A673 (cell line): ENCODE measurements at regions of chr1 and their contacts with region 1.

Region 1: GRCh38 chr1:183932412-183932811 is 105.1 kb downstream of the COLGALT2 start:
- DNase-seq: peak; percentile 69
- H3K4me3 ChIP-seq: no peak overlapping the region
- H3K27ac ChIP-seq: peak overlapping the region; percentile 32
- H3K4me1 ChIP-seq: peaks cover 21% of the 10 kb centered on the region
- H3K27me3 ChIP-seq: no peaks in the 10 kb centered on the region
- CTCF ChIP-seq: no peak

Region 2: DNA sequence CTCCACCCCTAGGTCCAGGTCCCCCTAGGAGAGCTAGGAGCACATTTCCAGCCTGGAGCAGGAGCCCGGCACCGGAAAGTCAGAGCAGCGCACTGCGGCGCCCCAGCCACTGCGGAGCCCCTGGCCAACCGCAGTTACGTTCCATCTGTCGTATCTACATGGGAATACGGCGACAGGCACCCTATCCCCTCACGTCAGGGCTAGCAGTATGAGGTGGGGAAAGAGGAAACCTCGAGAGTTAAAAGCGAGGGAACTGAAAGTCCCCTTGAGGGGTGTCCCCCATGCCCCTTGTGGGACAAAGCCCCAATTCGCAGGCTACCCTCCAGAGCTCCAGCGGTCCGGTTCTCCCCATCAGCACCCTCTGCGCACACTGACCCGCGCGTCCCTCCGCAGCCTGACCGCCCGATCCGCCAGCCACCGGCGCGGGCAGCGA is 104.1 kb after region 1 on chr1:
- CTCF ChIA-PET with region 1: no interaction called
- POLR2A ChIA-PET with region 1: no interaction called
- intact Hi-C with region 1: loop called (anchors 5 kb)
- DNase-seq: peak; percentile 83
- H3K4me3 ChIP-seq: peak overlapping the region; percentile 74
- H3K27ac ChIP-seq: peak overlapping the region; percentile 90
- H3K4me1 ChIP-seq: peaks cover 33% of the 10 kb centered on the region
- H3K27me3 ChIP-seq: no peaks in the 10 kb centered on the region
- CTCF ChIP-seq: no peak

Region 3: DNA sequence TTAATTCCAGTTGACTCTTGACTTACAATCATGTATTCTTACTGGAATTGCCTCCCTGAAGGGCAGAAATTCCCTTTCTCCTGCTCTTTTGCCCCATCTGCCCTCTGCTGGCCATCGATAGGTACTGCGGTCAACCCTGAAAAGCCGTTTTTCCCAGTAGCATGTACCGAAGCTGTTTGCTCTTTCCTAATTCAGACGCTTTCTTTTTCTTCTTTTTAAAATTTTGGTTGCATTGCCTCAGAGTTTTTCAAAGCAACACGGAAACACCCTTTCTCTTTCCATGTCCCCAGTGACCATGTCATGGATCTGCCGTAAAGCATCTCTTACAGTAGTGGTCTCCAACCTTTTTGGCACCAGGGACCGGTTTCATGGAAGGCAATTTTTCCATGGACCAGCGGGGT is 290.2 kb after region 1 on chr1:
- CTCF ChIA-PET with region 1: no interaction called
- POLR2A ChIA-PET with region 1: interaction called, 13 read pairs
- intact Hi-C with region 1: no loop called
- DNase-seq: peak; percentile 74
- H3K4me3 ChIP-seq: no peak overlapping the region
- H3K27ac ChIP-seq: no peak overlapping the region
- H3K4me1 ChIP-seq: peaks cover 22% of the 10 kb centered on the region
- H3K27me3 ChIP-seq: no peaks in the 10 kb centered on the region
- CTCF ChIP-seq: peak; percentile 95

Region 4: DNA sequence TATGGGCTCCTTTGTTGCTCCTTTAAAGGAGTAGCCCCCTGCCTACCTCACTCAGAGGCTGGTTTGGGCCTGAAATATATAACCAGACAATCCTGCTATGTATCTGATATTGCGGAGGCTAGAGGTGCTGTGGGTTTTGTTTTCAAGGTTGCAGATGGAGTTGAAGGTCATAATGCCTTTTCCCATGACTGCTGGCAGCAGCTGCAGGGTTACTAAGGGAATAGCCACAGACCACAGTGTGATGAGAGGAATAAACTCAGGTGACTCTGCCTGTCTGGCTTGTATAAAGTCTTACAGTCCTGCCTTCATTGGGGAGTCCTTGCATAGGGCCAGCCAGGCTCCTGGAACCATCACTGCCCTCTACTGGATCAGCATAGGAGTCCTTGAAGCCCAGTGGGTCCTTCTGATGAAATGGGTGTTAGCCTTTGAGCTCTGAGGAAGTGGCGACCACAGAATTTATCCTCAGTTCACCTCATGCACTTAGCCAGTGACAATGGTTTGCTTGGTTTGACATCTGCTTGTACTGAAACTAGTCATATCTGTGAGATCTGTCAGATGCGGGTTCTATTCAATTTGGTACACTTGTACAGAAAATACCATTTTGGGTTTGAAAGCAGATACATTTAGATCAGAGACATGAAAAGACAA is 1627.4 kb after region 1 on chr1:
- CTCF ChIA-PET with region 1: no interaction called
- POLR2A ChIA-PET with region 1: no interaction called
- intact Hi-C with region 1: no loop called
- DNase-seq: peak; percentile 52
- H3K4me3 ChIP-seq: no peak overlapping the region
- H3K27ac ChIP-seq: no peak overlapping the region
- H3K4me1 ChIP-seq: peaks cover 26% of the 10 kb centered on the region
- H3K27me3 ChIP-seq: no peaks in the 10 kb centered on the region
- CTCF ChIP-seq: peak; percentile 58